K562 (cell line): ENCODE measurements at regions of chr1 and their contacts with region 1.

Region 1: DNA sequence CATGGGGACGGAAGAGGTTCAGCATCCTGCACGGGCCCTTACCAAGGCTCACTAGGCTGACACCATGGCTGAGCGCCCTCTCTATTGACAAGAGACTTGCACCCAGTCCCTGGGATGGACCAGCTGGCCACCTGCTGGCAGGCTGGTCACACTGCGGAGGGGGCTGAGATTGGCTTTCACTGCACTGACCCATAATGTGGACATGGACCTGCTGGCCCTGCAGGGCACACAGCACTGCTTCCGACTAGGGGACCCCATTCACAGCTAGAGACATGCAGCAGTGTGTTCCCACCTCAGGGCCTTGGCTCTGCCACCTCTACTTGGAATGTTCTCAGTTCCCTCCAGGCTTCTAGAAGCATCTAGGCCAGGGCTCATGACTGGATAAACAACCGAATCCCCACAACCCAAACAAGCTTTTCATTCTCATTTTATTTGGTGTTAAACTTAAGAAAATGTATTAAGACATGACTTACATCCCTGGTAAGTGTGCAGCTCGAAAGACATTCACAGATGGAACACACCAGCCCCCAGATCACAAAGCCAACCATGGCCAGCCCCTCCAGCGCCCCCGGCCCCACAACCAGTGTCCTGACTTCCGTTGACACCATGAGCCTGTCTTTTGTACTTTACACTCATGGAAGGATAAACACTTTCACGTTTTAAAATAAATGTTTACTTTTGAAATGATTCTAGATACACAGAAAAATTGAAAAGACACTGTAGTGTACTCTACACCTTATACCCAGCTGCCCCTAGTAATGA is 9.3 kb upstream of the SRARP start:
- DNase-seq: peak; percentile 65 to 77 (median 72)
- ATAC-seq: peak; percentile 95
- H3K4me3 ChIP-seq: no peak overlapping the region
- H3K27ac ChIP-seq: no peak overlapping the region
- H3K4me1 ChIP-seq: peaks cover 0 to 29% of the 10 kb centered on the region in 2 experiments; a peak in 2 of 5 replicates
- H3K27me3 ChIP-seq: peaks cover 13 to 28% of the 10 kb centered on the region in 2 experiments; a peak in 3 of 5 replicates
- CTCF ChIP-seq: peak; percentile 89 to 96 (median 93)
- EP300 ChIP-seq: no peak
- POLR2A ChIP-seq: no peak
- RAD21 ChIP-seq: peak; percentile 75 to 96

Region 2: DNA sequence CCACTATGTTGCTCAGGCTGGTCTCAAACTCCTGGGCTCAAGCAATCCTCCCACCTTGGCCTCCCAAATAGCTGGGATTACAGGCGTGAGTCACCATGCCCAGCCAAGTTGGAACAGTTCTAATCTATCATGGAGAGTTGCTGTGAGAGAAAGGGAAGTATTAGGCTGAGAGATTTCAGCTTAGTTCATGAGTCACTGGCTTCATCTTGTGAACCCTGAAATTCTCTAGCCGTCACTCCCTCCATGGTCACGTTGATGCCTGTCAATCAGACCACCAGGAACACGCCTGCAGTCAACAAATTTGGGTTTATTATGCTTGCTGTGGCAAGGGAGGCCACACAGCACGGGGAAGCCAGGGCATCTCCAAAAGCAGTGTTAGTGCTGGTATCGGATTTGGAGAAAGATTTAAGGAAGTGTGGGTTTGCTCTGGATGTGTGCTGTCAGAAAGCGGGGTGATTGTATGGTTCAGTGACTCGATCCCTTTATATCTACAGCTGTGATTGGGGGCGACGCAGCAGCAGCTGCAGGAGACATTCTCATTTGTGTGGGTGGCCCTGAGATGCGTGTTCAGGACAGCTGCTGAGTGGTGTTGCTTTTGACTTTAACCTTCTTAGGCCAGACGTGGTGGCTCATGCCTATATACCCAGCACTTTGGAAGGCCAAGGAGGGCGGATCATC is 206.0 kb before region 1 on chr1:
- CTCF ChIA-PET with region 1: interaction called, 5 read pairs
- POLR2A ChIA-PET with region 1: no interaction called
- in situ Hi-C with region 1: no loop called
- intact Hi-C with region 1: loop called (anchors 1 kb)
- DNase-seq: peak in 2 of 4 experiments; percentile 22 to 60
- ATAC-seq: peak; percentile 11; the same call in 1 of the 3 replicates
- H3K4me3 ChIP-seq: no peak overlapping the region
- H3K27ac ChIP-seq: peak overlapping the region; percentile 31; the same call in 1 of the 3 replicates
- H3K4me1 ChIP-seq: peaks cover 11 to 19% of the 10 kb centered on the region in 2 experiments; a peak in 4 of 5 replicates
- H3K27me3 ChIP-seq: peaks cover 0 to 8% of the 10 kb centered on the region in 2 experiments; a peak in 2 of 5 replicates
- CTCF ChIP-seq: no peak
- EP300 ChIP-seq: no peak
- POLR2A ChIP-seq: no peak
- RAD21 ChIP-seq: no peak

Region 3: DNA sequence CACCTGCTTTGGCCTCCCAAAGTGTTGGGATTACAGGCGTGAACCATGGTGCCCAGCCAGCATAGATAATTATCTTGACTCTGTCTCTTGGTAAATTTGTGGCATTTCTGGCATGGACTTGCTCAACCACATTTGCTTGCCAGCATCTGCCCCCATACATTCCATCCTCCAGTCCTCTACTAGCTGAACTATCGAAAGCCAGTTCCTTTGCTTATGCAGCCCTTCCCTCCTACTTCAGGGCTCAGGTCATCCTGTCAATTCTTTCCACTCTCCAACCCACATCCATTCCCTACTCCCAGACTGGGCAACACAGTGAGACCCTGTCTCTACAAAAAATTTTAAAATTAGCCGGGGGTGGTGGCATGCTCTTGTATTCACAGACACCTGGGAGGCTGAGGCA is 174.3 kb before region 1 on chr1:
- CTCF ChIA-PET with region 1: no interaction called
- POLR2A ChIA-PET with region 1: no interaction called
- in situ Hi-C with region 1: no loop called
- intact Hi-C with region 1: loop called (anchors 1 kb)
- DNase-seq: no peak
- ATAC-seq: no peak
- H3K4me3 ChIP-seq: no peak overlapping the region
- H3K27ac ChIP-seq: no peak overlapping the region
- H3K4me1 ChIP-seq: no peaks in the 10 kb centered on the region; a peak in 3 of 5 replicates
- H3K27me3 ChIP-seq: no peaks in the 10 kb centered on the region
- CTCF ChIP-seq: no peak
- EP300 ChIP-seq: no peak
- POLR2A ChIP-seq: no peak
- RAD21 ChIP-seq: no peak

Region 4: GRCh38 chr1:15944308-15945010 is 50.3 kb before region 1 on chr1:
- CTCF ChIA-PET with region 1: no interaction called
- POLR2A ChIA-PET with region 1: no interaction called
- in situ Hi-C with region 1: no loop called
- intact Hi-C with region 1: no loop called
- DNase-seq: no peak
- ATAC-seq: no peak
- H3K4me3 ChIP-seq: no peak overlapping the region
- H3K27ac ChIP-seq: no peak overlapping the region
- H3K4me1 ChIP-seq: peaks cover 15 to 52% of the 10 kb centered on the region in 2 experiments
- H3K27me3 ChIP-seq: no peaks in the 10 kb centered on the region
- CTCF ChIP-seq: no peak
- EP300 ChIP-seq: no peak
- POLR2A ChIP-seq: no peak
- RAD21 ChIP-seq: no peak